WTC11 (cell line): ENCODE measurements at regions of chr16 and their contacts with region 1.

Region 1: GRCh38 chr16:87778830-87779579 is 13.2 kb upstream of the KLHDC4 start:
- DNase-seq: peak; percentile 97
- ATAC-seq: peak; percentile 77
- H3K4me3 Mint-ChIP-seq: no peak overlapping the region
- H3K27ac Mint-ChIP-seq: peak overlapping the region; percentile 95
- H3K4me1 Mint-ChIP-seq: peaks cover 14% of the 10 kb centered on the region
- H3K27me3 Mint-ChIP-seq: peaks cover 3% of the 10 kb centered on the region
- CTCF ChIP-seq: peak; percentile 97

Region 2: DNA sequence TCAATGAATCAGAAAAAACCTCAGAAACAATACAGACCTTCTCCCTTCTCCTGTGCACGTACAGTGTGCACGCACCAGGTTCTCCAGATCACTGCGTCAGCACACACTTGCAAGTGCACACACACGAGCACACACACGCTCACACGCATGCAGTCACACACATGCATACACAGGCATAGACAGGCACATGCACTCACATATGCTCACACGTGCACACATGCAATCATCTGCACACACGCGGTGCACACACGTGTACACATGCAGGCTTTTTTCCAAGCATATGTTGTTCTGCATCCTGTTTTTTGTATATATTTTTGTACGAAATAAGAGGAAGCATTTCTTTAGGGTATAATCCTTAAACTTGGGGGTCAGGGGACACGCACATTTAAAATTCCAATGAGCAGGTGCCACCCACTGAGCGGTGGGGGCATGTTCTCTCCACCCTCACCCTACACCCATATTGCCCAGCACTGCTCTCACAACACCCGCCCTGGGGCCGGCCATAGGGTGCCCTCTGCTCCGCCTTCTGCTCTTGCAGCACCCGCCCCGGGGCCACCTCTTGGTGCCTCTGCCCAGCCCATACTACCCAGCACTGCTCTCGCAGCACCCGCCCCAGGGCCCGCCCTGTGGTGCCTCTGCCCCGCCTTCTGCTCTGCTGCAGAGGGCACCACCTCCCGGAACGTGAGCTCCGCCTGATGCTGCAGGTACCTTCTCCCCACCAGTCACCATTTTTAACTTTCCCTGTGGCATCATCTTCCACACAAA is 34.1 kb before region 1 on chr16:
- CTCF ChIA-PET with region 1: no interaction called
- POLR2A ChIA-PET with region 1: no interaction called
- DNase-seq: no peak
- ATAC-seq: no peak
- H3K4me3 Mint-ChIP-seq: no peak overlapping the region
- H3K27ac Mint-ChIP-seq: no peak overlapping the region
- H3K4me1 Mint-ChIP-seq: no peaks in the 10 kb centered on the region
- H3K27me3 Mint-ChIP-seq: no peaks in the 10 kb centered on the region; the same call in 1 of the 2 replicates
- CTCF ChIP-seq: no peak

Region 3: DNA sequence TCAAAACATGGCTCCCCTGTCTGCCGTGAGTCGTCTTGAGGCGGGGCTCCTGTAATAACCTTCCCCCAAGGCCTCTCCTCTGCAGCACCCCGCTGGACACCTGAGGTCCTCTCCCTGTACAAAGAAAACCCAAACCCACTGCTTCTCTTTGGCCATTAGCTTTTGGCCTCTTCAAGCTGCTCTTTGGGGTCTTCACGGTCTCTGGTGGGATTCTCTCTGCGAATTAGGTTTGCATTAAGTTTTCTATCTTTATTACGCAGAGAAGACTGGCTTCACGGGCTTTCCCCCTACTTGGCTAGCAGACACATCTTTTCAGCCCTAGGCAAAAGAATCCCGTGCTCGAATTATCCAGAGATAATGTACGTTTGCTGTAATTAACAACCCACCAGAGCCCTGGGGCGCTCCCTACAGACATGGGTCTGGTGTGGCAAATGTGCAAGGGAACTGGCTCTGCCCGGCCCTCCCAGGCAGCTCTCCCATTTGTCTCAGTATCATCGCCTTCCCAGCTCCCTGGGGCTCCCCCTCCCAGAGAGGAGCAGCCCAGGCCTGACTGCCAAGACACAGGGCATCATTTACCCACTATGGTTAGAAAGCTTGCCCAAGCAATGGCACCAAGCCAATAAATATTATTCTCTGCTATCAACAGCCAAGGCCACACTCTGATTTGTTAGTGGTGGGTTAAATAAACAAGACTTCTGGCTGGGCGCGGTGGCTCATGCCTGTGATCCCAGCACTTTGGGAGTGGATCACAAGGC is 11.4 kb after region 1 on chr16:
- CTCF ChIA-PET with region 1: interaction called, 28 read pairs
- POLR2A ChIA-PET with region 1: no interaction called
- DNase-seq: no peak
- ATAC-seq: no peak
- H3K4me3 Mint-ChIP-seq: no peak overlapping the region
- H3K27ac Mint-ChIP-seq: no peak overlapping the region
- H3K4me1 Mint-ChIP-seq: no peaks in the 10 kb centered on the region
- H3K27me3 Mint-ChIP-seq: no peaks in the 10 kb centered on the region
- CTCF ChIP-seq: no peak

Region 4: DNA sequence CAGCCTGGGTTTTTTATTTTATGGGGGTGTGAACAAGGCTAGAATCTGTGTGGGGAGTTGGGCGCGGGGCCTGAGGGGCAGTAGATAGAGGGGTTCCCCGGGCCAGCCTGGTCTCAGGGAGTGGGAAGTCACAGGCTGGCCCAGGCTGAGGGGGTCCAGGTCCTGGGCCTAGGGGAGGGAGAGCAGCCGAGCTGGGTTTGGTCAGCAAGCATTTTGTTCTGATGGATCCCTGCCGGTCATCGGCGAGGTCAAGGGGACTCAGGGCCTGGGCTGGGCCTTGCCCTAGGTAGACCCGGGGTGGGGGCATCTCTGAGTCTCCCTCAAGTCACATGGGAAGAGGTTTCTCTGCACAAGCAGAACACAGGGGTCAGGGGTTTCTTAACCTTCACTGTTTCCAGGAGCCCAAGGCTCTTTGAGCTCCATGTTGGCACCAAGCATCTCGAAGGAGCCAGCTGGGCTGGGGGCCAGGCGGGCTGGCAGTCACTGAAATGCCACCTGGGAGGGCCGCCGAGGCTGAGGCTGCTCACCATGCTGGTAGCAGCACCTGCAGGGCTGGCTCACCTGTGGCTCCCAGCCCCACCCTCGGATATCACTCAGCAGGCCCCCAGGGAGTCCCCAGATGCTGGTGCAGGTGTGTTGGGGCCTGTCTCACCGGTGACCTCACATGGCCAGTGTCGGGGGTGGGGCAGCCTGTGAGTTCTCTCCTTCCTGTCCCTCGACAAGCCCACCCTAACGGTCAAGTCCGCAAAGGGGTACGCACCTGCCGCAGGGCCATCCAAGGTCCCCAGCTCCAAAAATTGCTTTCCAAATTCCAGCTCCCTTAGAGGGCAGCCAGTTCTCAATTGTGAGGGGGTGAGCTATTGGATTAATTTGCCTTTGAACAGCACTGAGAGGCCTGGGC is 49.3 kb after region 1 on chr16:
- CTCF ChIA-PET with region 1: interaction called, 52 read pairs
- POLR2A ChIA-PET with region 1: interaction called, 11 read pairs
- DNase-seq: no peak
- ATAC-seq: no peak
- H3K4me3 Mint-ChIP-seq: no peak overlapping the region
- H3K27ac Mint-ChIP-seq: no peak overlapping the region
- H3K4me1 Mint-ChIP-seq: peaks cover 53% of the 10 kb centered on the region
- H3K27me3 Mint-ChIP-seq: no peaks in the 10 kb centered on the region
- CTCF ChIP-seq: no peak

Region 5: DNA sequence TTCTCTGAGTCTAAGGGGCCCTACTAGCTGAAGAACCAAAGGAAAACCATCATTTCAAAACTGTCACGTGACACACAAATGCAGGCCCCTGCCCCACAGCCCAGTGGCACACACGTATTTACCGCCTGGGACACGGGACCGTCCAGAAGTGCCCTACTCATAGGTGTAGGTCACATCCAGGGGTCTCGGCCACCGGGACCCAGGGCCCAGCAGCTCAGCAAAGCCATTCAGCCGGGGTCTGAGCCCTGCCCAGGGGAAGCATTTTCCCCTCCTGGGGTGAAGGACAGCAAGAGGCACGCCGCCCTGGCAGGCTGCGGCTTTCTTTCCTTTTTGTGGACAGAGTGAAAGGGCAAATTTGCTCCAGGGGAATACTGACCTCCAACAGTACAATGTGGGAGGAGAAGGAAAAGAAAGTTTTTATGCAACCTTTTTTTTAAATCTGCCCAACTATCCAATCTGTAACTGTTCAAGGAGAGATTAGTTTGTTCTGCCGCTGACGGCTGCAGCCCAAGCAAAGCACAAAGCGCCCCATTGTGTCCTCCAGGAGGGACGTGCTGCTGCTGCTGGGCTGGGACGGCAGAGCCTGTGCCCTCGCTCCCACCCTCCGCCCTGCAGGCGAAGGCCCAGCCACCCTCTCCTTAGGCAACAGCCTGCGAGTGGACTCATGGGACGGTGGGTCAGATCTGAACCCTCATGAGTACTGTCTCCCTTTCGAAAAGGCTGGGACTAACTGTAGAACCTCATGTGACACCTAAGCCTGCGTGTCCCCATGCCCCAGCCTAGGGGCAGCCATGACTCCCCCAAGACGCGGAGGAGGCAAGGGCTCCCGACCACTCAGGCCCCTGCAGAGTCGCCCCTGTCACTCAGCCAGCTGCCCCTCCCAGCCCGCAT is 69.0 kb after region 1 on chr16:
- CTCF ChIA-PET with region 1: interaction called, 122 read pairs
- POLR2A ChIA-PET with region 1: interaction called, 15 read pairs
- DNase-seq: no peak
- ATAC-seq: no peak
- H3K4me3 Mint-ChIP-seq: no peak overlapping the region
- H3K27ac Mint-ChIP-seq: no peak overlapping the region
- H3K4me1 Mint-ChIP-seq: peaks cover 27% of the 10 kb centered on the region
- H3K27me3 Mint-ChIP-seq: no peaks in the 10 kb centered on the region
- CTCF ChIP-seq: no peak

Region 6: GRCh38 chr16:87877938-87878507 is 99.0 kb after region 1 on chr16:
- CTCF ChIA-PET with region 1: interaction called, 192 read pairs
- POLR2A ChIA-PET with region 1: interaction called, 4 read pairs
- DNase-seq: no peak
- ATAC-seq: no peak
- H3K4me3 Mint-ChIP-seq: no peak overlapping the region
- H3K27ac Mint-ChIP-seq: no peak overlapping the region
- H3K4me1 Mint-ChIP-seq: peaks cover 70% of the 10 kb centered on the region
- H3K27me3 Mint-ChIP-seq: no peaks in the 10 kb centered on the region
- CTCF ChIP-seq: no peak